ENCODE measurements at regions of chr1 and their contacts with region 1.

Region 1: GRCh38 chr1:113042285-113043143 is 30.5 kb upstream of the LRIG2 start:
- DNase-seq: peak; percentile 85
- H3K4me3 Mint-ChIP-seq: no peak overlapping the region
- H3K27ac Mint-ChIP-seq: no peak overlapping the region
- H3K4me1 Mint-ChIP-seq: peaks cover 14% of the 10 kb centered on the region
- H3K27me3 Mint-ChIP-seq: no peaks in the 10 kb centered on the region
- CTCF ChIP-seq: peak; percentile 64

Region 2: DNA sequence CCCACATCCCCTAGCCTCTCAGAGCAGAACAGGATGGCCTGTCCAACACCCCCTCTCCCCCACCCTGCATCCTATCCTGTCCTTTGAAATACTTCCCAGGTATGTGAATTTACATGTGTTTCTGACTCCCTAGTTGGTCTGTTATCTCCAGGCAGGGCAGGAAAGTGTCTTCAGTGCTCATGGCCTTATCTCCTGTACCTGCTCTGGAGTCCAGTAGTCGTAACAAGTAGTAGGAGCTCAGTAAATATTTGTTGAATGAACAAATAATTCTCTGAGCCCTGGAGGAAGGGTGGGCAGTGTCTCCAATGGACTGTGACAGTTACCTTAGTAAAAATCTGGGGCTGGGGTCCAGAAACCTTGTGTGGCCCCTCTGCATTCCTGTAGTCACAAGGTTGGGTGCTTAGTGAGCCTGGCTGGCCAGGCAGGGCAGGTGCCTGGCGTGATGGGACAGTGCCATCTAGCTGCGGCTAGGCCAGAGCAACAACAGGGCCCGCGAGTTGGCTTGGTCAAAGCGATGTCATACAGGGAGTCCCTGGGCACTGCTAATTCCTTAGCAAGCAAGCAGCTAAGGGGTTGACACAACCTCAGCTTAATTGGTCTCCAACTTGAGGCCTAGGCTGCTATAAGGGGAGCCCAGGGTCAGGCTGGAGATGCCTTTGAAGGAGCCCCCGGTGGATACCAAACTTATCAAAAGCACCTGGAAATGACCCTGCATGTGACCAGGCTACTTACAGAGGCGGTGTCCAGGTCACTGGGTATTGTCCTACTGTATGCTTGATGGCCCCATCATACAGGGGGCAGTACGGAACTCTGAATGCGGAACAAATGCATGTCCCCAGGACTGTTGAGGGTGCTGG is 238.4 kb before region 1 on chr1:
- CTCF ChIA-PET with region 1: interaction called, 86 read pairs
- POLR2A ChIA-PET with region 1: interaction called, 4 read pairs
- intact Hi-C with region 1: loop called (anchors 1 kb)
- DNase-seq: peak; percentile 78
- H3K4me3 Mint-ChIP-seq: no peak overlapping the region
- H3K27ac Mint-ChIP-seq: no peak overlapping the region
- H3K4me1 Mint-ChIP-seq: peaks cover 3% of the 10 kb centered on the region
- H3K27me3 Mint-ChIP-seq: no peaks in the 10 kb centered on the region
- CTCF ChIP-seq: peak; percentile 84

Region 3: DNA sequence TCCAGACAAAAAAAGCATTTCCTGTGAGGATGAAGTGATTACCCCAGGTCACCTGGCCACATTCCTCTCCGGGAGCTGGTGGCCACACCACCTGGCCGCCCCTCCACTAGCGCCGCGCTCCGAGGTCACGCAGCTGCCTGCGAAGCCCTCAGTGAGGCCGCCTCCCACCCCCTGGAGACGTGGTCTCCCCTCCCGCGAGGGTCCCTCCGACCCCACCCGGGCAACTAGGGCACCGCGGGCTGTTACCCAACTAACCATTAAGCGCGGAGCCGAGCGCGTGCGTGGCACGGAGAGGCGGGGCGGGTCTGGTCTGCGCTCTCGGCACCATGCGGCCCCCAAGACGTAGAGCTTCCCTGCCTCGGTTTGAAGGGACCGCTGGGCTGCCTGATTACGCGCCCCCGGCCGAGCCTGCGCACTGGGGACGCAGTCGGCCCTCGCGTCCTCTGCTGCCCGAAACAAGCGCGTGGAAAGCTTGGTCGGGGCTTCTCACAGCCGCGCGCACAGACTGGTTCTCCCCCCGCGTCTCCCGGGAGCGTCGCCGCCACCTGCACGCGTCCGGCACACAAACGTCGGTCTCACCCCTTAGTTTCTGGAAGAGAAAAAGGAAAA is 193.0 kb before region 1 on chr1:
- CTCF ChIA-PET with region 1: no interaction called
- POLR2A ChIA-PET with region 1: no interaction called
- intact Hi-C with region 1: no loop called
- DNase-seq: peak; percentile 52
- H3K4me3 Mint-ChIP-seq: peak overlapping the region; percentile 84
- H3K27ac Mint-ChIP-seq: peak overlapping the region; percentile 46
- H3K4me1 Mint-ChIP-seq: peaks cover 18% of the 10 kb centered on the region
- H3K27me3 Mint-ChIP-seq: no peaks in the 10 kb centered on the region
- CTCF ChIP-seq: no peak

Region 4: DNA sequence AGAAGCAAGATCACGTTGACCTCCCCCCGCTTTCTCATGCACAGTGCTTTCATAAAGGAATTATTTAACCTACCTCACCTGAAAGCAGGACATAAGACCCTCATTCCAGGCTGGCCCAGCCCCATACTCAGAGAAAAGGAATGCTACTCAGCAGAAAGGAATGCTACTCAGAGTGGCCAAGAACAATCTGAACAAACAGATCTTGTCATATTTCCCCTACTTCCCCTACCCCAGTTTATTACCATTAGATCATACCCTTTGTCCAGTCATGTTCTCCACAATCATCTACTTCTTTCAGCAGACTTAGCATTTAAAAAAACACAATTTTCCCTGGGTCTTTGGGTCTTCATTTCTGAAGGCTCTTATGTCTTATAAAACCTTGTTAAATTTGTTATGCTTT is 176.4 kb before region 1 on chr1:
- CTCF ChIA-PET with region 1: interaction called, 18 read pairs
- POLR2A ChIA-PET with region 1: no interaction called
- intact Hi-C with region 1: no loop called
- DNase-seq: no peak
- H3K4me3 Mint-ChIP-seq: peak overlapping the region; percentile 2
- H3K27ac Mint-ChIP-seq: peak overlapping the region; percentile 11
- H3K4me1 Mint-ChIP-seq: peaks cover 27% of the 10 kb centered on the region
- H3K27me3 Mint-ChIP-seq: no peaks in the 10 kb centered on the region
- CTCF ChIP-seq: no peak

Region 5: GRCh38 chr1:112882271-112882744 is 160.2 kb before region 1 on chr1:
- CTCF ChIA-PET with region 1: interaction called, 125 read pairs
- POLR2A ChIA-PET with region 1: interaction called, 12 read pairs
- intact Hi-C with region 1: loop called (anchors 1 kb)
- DNase-seq: no peak
- H3K4me3 Mint-ChIP-seq: no peak overlapping the region
- H3K27ac Mint-ChIP-seq: peak overlapping the region; percentile 43
- H3K4me1 Mint-ChIP-seq: peaks cover 20% of the 10 kb centered on the region
- H3K27me3 Mint-ChIP-seq: no peaks in the 10 kb centered on the region
- CTCF ChIP-seq: no peak

Region 6: DNA sequence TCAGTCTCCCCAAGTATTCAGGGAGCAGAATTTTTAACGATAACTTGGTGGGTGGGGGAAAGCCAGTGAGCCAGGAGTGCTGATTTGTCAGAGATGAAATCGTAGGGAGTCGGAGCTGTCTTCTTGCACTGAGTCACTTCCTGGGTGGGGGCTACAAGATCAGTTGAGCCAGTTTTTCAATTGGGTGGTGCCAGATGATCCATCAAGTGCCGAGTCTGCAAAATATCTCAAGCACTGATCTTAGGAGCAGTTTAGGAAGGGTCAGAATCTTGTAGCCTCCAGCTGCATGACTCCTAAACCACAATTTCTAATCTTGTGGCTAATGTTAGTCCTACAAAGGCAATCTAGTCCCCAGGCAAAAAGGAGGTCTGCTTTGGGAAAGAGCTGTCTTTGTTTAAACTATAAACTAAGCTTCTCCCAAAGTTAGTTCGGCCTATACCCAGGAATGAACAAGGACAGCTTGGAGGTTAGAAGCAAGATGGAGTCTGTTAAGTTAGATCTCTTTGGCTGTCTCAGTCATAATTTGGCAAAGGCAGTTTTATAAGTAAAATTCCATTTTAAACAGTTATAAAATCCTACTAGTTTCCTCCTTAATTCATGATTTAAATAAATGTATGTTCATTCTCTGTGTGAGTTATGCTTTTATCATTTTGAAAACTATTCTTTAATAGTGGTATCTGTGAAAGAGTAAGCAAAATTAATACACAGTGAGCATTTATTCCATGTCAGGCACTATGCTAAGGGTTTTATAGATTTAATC is 138.3 kb before region 1 on chr1:
- CTCF ChIA-PET with region 1: interaction called, 11 read pairs
- POLR2A ChIA-PET with region 1: interaction called, 5 read pairs
- intact Hi-C with region 1: no loop called
- DNase-seq: peak; percentile 89
- H3K4me3 Mint-ChIP-seq: peak overlapping the region; percentile 24
- H3K27ac Mint-ChIP-seq: peak overlapping the region; percentile 92
- H3K4me1 Mint-ChIP-seq: peaks cover 35% of the 10 kb centered on the region
- H3K27me3 Mint-ChIP-seq: no peaks in the 10 kb centered on the region
- CTCF ChIP-seq: no peak

Region 7: GRCh38 chr1:113057006-113057405 is 14.5 kb after region 1 on chr1:
- CTCF ChIA-PET with region 1: interaction called, 23 read pairs
- POLR2A ChIA-PET with region 1: no interaction called
- intact Hi-C with region 1: no loop called
- DNase-seq: no peak
- H3K4me3 Mint-ChIP-seq: no peak overlapping the region
- H3K27ac Mint-ChIP-seq: no peak overlapping the region
- H3K4me1 Mint-ChIP-seq: no peaks in the 10 kb centered on the region
- H3K27me3 Mint-ChIP-seq: no peaks in the 10 kb centered on the region
- CTCF ChIP-seq: no peak

Region 8: DNA sequence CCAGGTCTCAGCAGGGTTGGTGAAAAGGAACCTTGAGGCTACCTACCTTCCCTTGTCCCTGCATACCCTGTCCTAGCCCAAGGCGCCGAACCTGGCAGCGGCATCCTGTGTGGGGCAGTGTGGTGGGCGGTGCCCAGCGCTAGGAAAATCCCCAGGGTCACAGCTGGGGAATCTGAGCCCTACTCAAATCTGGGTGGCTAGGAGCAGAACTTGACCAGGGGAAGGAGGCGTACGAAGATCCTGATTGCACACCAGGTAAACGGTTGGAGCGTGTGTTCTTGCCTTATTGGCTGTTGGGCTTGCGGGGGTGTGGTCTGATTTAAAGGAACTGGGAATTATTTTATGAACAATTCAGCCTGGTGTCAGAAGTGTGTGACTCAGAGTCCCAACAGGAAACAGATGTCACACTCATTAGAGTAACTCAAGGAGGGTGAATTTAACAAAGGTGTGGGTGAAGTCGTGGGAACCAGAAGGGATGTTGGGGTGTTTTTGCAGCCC is 149.1 kb after region 1 on chr1:
- CTCF ChIA-PET with region 1: no interaction called
- POLR2A ChIA-PET with region 1: no interaction called
- intact Hi-C with region 1: no loop called
- DNase-seq: peak; percentile 16
- H3K4me3 Mint-ChIP-seq: no peak overlapping the region
- H3K27ac Mint-ChIP-seq: no peak overlapping the region
- H3K4me1 Mint-ChIP-seq: peaks cover 6% of the 10 kb centered on the region
- H3K27me3 Mint-ChIP-seq: no peaks in the 10 kb centered on the region
- CTCF ChIP-seq: no peak